Pancreas (tissue), 10 donors: ENCODE measurements at regions of chr9 and their contacts with region 1.

Region 1: DNA sequence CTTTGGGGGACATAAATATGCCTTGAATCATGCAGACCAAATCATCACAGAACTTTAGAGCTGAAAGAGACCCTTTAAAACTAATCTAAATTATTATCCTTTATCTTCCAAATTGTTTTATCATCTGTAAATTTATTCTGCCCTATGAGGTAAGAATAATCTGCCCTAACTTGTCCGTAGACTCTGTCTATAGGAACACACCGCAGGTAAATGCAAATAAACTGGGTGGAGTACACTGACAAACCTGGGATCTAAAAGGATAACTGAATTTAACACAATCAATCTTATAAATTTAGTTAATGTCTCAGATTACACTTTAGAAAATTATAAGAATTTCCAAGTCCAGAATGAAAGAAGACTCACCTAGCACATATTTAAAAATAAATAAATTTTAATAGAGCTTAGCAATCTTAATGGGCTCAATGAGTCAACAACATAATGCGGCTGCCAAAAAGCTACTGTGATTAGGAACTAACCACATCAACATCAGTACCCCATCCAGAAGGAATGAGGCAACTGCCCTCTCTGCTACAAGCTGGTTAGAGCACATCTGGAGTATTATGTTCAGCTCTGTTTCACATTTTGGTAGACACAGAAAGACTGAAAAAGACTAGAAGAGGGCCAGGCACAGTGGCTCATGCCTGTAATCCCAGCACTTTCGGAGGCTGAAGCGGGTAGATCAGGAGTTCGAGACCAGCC is 5.6 kb downstream of the MEGF9 start:
- DNase-seq: no peak
- ATAC-seq: no peak
- H3K4me3 ChIP-seq: no peak overlapping the region
- H3K27ac ChIP-seq: no peak overlapping the region
- H3K4me1 ChIP-seq: peaks cover 5 to 35% (median 13%) of the 10 kb centered on the region in 3 donors
- H3K27me3 ChIP-seq: no peaks in the 10 kb centered on the region
- CTCF ChIP-seq: no peak

Region 2: GRCh38 chr9:120619751-120620655 is 88.7 kb before region 1 on chr9:
- intact Hi-C with region 1: loop called in 1 of 3 experiments (anchors 10 kb)
- DNase-seq: peak in 3 of 6 donors; percentile 44 to 69 (median 59)
- ATAC-seq: peak; percentile 93 to 99 (median 96)
- H3K4me3 ChIP-seq: no peak overlapping the region
- H3K27ac ChIP-seq: no peak overlapping the region
- H3K4me1 ChIP-seq: peaks cover 0 to 7% (median 5%) of the 10 kb centered on the region in 3 donors
- H3K27me3 ChIP-seq: no peaks in the 10 kb centered on the region
- CTCF ChIP-seq: peak; percentile 71 to 82 (median 75)

Region 3: GRCh38 chr9:120985810-120986222 is 277.1 kb after region 1 on chr9:
- intact Hi-C with region 1: no loop called
- DNase-seq: no peak
- ATAC-seq: peak; percentile 40 to 80 (median 68)
- H3K4me3 ChIP-seq: no peak overlapping the region
- H3K27ac ChIP-seq: no peak overlapping the region
- H3K4me1 ChIP-seq: no peaks in the 10 kb centered on the region
- H3K27me3 ChIP-seq: no peaks in the 10 kb centered on the region
- CTCF ChIP-seq: peak in 3 of 4 donors; percentile 13 to 35 (median 13)

Region 4: DNA sequence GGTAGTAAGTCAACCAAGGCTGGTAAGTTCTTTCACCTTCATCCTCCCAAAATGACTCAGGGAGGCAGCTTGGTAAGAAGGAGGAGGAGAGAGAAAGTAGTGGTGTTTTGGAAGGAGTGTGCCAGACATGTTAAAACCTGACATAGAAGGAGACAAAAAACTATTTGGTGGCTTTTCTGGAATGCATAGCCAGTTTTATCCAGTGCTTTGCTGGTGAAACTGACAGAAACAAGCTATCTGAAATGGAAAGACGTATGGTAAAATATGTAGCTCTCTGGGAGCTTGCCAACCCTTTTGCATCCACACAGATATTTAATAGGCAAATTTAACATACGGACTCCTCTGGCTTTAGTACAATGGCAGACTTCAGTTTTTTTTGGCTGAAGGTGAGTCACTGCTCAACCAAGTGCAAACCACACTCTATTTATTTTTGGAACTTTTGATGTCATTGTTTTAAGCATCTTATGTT is 447.6 kb after region 1 on chr9:
- intact Hi-C with region 1: no loop called
- DNase-seq: no peak
- ATAC-seq: no peak
- H3K4me3 ChIP-seq: no peak overlapping the region
- H3K27ac ChIP-seq: no peak overlapping the region
- H3K4me1 ChIP-seq: no peaks in the 10 kb centered on the region
- H3K27me3 ChIP-seq: no peaks in the 10 kb centered on the region
- CTCF ChIP-seq: no peak